ENCODE measurements at regions of chr16 and their contacts with region 1.

Region 1: DNA sequence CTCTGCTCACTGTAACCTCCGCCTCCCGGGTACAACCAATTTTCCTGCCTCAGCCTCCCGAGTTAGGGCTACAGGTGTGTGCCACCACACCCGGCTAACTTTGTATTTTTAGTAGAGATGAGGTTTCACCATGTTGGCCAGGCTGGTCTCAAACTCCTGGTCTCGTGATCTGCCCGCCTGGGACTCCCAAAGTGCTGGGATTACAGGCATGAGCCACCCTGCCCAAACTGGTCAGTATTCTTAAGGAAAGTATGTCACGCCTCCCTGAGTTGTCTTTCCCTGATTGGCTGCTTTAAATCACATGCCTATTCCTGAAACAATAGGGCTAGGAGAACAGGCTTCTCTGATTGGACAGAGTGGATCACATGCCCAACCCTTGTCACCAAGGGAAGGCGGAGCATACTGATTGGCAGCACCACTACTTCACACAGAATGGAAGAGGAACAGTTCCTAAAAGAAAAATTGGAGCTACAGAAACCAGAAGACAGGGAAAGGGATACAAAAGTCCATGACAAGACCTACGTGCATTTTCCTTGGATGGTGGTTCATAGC is 17.6 kb upstream of the CYB5B start:
- DNase-seq: no peak
- H3K4me3 ChIP-seq: no peak overlapping the region
- H3K4me3 Mint-ChIP-seq: no peak overlapping the region
- H3K27ac ChIP-seq: no peak overlapping the region
- H3K27ac Mint-ChIP-seq: no peak overlapping the region
- H3K4me1 ChIP-seq: no peaks in the 10 kb centered on the region
- H3K4me1 Mint-ChIP-seq: peaks cover 0 to 3% (median 0%) of the 10 kb centered on the region in 3 donors
- H3K27me3 ChIP-seq: no peaks in the 10 kb centered on the region
- H3K27me3 Mint-ChIP-seq: peaks cover 0 to 3% of the 10 kb centered on the region in 2 donors

Region 2: DNA sequence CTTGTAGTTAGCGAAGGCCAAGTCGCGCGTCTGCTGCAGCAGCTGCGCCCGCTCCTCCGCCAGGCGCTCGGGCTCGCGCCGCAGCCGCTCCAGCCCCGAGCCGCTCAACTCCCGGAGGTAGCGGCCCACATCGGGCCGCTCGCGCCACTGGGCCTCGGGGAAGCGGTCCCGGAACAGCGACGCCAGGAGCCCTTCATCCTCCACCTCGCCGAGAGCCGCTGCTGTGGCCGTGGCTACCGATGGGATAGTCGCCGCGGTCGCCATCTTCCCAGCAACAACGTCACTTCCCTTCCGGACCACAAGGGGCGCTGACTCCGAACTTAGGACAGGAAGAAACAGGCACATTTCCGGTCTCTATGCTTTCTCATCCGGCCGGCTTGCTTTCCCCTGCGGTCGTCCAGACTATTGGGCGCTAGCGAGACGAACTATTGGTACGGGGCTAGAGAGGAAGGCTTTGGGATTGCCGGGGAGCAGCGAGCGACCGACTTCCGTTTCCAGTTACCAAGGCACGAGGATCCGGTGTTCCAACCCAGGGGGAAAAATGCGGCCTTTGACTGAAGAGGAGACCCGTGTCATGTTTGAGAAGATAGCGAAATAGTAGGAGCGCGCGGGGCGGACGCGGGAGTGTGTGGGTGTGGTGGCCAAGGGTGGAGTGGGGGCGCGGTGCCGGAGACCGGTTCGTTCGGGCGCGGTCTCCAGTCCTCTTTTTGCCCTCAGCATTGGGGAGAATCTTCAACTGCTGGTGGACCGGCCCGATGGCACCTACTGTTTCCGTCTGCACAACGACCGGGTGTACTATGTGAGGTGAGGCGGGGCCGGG is 67.4 kb before region 1 on chr16 and contains the starts of genes COG8 and NIP7:
- CTCF ChIA-PET with region 1: no interaction called
- POLR2A ChIA-PET with region 1: no interaction called
- DNase-seq: peak; percentile 84 to 92 (median 89)
- H3K4me3 ChIP-seq: peak within 1 kb of the TSS; percentile 86
- H3K4me3 Mint-ChIP-seq: peak within 1 kb of the TSS; percentile 98 to 100 (median 99)
- H3K27ac ChIP-seq: peak within 1 kb of the TSS; percentile 70
- H3K27ac Mint-ChIP-seq: peak within 1 kb of the TSS; percentile 88 to 100 (median 98)
- H3K4me1 ChIP-seq: peaks cover 32% of the 10 kb centered on the region
- H3K4me1 Mint-ChIP-seq: peaks cover 43 to 63% (median 60%) of the 10 kb centered on the region in 3 donors
- H3K27me3 ChIP-seq: no peaks in the 10 kb centered on the region
- H3K27me3 Mint-ChIP-seq: no peaks in the 10 kb centered on the region
- total RNA-seq, gene COG8: 38.1 to 40.0 TPM
- total RNA-seq, gene NIP7: 73.8 to 80.1 TPM

Region 3: GRCh38 chr16:69396187-69397061 is 10.4 kb before region 1 on chr16:
- CTCF ChIA-PET with region 1: interaction called, 11 read pairs
- POLR2A ChIA-PET with region 1: no interaction called
- DNase-seq: peak; percentile 58 to 75 (median 62)
- H3K4me3 ChIP-seq: no peak overlapping the region
- H3K4me3 Mint-ChIP-seq: peak overlapping the region in 1 of 7 donors; percentile 2
- H3K27ac ChIP-seq: no peak overlapping the region
- H3K27ac Mint-ChIP-seq: peak overlapping the region in 6 of 8 donors; percentile 8 to 76 (median 45)
- H3K4me1 ChIP-seq: peaks cover 6% of the 10 kb centered on the region
- H3K4me1 Mint-ChIP-seq: peaks cover 3 to 10% (median 9%) of the 10 kb centered on the region in 3 donors
- H3K27me3 ChIP-seq: no peaks in the 10 kb centered on the region
- H3K27me3 Mint-ChIP-seq: peaks cover 0 to 4% of the 10 kb centered on the region in 2 donors

Region 4: GRCh38 chr16:69417520-69418199 is 10.8 kb after region 1 on chr16:
- CTCF ChIA-PET with region 1: no interaction called
- POLR2A ChIA-PET with region 1: no interaction called
- DNase-seq: no peak
- H3K4me3 ChIP-seq: no peak overlapping the region
- H3K4me3 Mint-ChIP-seq: no peak overlapping the region
- H3K27ac ChIP-seq: no peak overlapping the region
- H3K27ac Mint-ChIP-seq: peak overlapping the region in 1 of 8 donors; percentile 71
- H3K4me1 ChIP-seq: no peaks in the 10 kb centered on the region
- H3K4me1 Mint-ChIP-seq: peaks cover 0 to under 1% (median 0%) of the 10 kb centered on the region in 3 donors
- H3K27me3 ChIP-seq: no peaks in the 10 kb centered on the region
- H3K27me3 Mint-ChIP-seq: no peaks in the 10 kb centered on the region

Region 5: GRCh38 chr16:69494993-69495392 is 88.1 kb after region 1 on chr16:
- CTCF ChIA-PET with region 1: no interaction called
- POLR2A ChIA-PET with region 1: no interaction called
- DNase-seq: peak in 2 of 5 donors; percentile 17 to 22
- H3K4me3 ChIP-seq: no peak overlapping the region
- H3K4me3 Mint-ChIP-seq: no peak overlapping the region
- H3K27ac ChIP-seq: no peak overlapping the region
- H3K27ac Mint-ChIP-seq: no peak overlapping the region
- H3K4me1 ChIP-seq: no peaks in the 10 kb centered on the region
- H3K4me1 Mint-ChIP-seq: no peaks in the 10 kb centered on the region
- H3K27me3 ChIP-seq: no peaks in the 10 kb centered on the region
- H3K27me3 Mint-ChIP-seq: no peaks in the 10 kb centered on the region

Measured in CD8-positive, alpha-beta memory T cell (primary cell).